PC-3 (cell line): ENCODE measurements at regions of chr2 and their contacts with region 1.

Region 1: GRCh38 chr2:74715078-74715791 is 61.2 kb downstream of the SEMA4F start:
- DNase-seq: peak; percentile 93
- ATAC-seq: peak; percentile 62
- H3K4me3 ChIP-seq: peak overlapping the region; percentile 76
- H3K27ac ChIP-seq: peak overlapping the region; percentile 53
- H3K4me1 ChIP-seq: peaks cover 71% of the 10 kb centered on the region
- H3K27me3 ChIP-seq: no peaks in the 10 kb centered on the region
- CTCF ChIP-seq: peak; percentile 97

Region 2: GRCh38 chr2:74619651-74620297 is 95.5 kb before region 1 on chr2:
- CTCF ChIA-PET with region 1: no interaction called
- POLR2A ChIA-PET with region 1: no interaction called
- intact Hi-C with region 1: no loop called
- DNase-seq: no peak
- ATAC-seq: no peak
- H3K4me3 ChIP-seq: no peak overlapping the region
- H3K27ac ChIP-seq: no peak overlapping the region
- H3K4me1 ChIP-seq: no peaks in the 10 kb centered on the region
- H3K27me3 ChIP-seq: peaks cover 27% of the 10 kb centered on the region
- CTCF ChIP-seq: no peak

Region 3: GRCh38 chr2:74740389-74741075 is 25.3 kb after region 1 on chr2:
- CTCF ChIA-PET with region 1: no interaction called
- POLR2A ChIA-PET with region 1: no interaction called
- intact Hi-C with region 1: loop called (anchors 2 kb)
- DNase-seq: peak; percentile 98
- ATAC-seq: peak; percentile 93
- H3K4me3 ChIP-seq: peak overlapping the region; percentile 30; the same call in 1 of the 2 replicates
- H3K27ac ChIP-seq: peak overlapping the region; percentile 89
- H3K4me1 ChIP-seq: peaks cover 44% of the 10 kb centered on the region
- H3K27me3 ChIP-seq: no peaks in the 10 kb centered on the region
- CTCF ChIP-seq: no peak

Region 4: GRCh38 chr2:74867841-74868658 is 152.8 kb after region 1 on chr2:
- CTCF ChIA-PET with region 1: no interaction called
- POLR2A ChIA-PET with region 1: interaction called, 30 read pairs
- intact Hi-C with region 1: no loop called
- DNase-seq: peak; percentile 60
- ATAC-seq: peak; percentile 19; the same call in 1 of the 2 replicates
- H3K4me3 ChIP-seq: no peak overlapping the region
- H3K27ac ChIP-seq: peak overlapping the region; percentile 54
- H3K4me1 ChIP-seq: peaks cover 54% of the 10 kb centered on the region
- H3K27me3 ChIP-seq: no peaks in the 10 kb centered on the region
- CTCF ChIP-seq: no peak

Region 5: DNA sequence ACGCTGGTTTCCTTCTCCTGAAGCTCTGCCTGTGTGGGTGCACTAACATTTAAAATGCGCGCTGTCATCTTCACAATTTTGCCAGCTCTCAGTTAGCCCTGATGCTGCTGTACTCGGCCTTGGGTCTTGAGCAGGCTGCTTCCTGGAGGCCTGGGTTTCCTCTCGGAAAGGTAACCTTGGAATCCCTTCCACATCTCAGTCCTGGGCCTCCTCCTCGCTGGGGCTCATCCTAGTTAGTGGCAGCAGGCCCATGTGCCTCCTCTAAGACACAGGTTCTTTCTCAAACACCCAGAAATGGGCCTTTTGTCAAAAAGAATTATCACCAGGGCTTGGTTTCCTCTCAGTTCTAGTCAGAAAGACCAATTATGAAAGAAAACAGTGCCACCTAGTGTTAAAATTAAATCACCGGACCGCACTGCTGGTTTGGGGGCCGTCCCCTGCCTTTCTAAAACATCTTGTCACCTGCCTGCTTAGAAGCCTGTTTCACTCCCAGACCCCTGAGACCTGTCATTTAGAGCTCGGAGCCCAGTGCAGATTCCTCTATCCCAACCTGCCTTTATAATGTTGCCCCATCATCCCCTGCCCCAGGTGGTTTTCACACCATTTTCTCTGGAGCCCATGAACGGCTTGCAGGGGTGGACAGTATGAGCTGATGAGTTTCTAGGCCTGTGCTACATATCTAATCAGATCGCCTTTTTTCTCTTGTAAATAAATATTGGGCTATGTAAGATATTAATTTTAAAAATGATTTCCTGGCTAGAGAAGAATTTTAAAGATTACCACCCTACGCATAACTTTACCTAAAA is 161.0 kb after region 1 on chr2:
- CTCF ChIA-PET with region 1: no interaction called
- POLR2A ChIA-PET with region 1: no interaction called
- intact Hi-C with region 1: loop called (anchors 1 kb)
- DNase-seq: peak; percentile 82
- ATAC-seq: peak; percentile 77
- H3K4me3 ChIP-seq: no peak overlapping the region
- H3K27ac ChIP-seq: no peak overlapping the region
- H3K4me1 ChIP-seq: no peaks in the 10 kb centered on the region
- H3K27me3 ChIP-seq: no peaks in the 10 kb centered on the region
- CTCF ChIP-seq: peak; percentile 83